Mammary epithelial cell (primary cell): ENCODE measurements at regions of chr13 and their contacts with region 1.

Region 1: GRCh38 chr13:74287724-74288169 is 153.5 kb upstream of the KLF12 start:
- DNase-seq: peak; percentile 30
- H3K4me3 ChIP-seq: no peak overlapping the region
- H3K27ac ChIP-seq: no peak overlapping the region
- H3K4me1 ChIP-seq: peaks cover 26% of the 10 kb centered on the region
- H3K27me3 ChIP-seq: no peaks in the 10 kb centered on the region
- CTCF ChIP-seq: no peak

Region 2: DNA sequence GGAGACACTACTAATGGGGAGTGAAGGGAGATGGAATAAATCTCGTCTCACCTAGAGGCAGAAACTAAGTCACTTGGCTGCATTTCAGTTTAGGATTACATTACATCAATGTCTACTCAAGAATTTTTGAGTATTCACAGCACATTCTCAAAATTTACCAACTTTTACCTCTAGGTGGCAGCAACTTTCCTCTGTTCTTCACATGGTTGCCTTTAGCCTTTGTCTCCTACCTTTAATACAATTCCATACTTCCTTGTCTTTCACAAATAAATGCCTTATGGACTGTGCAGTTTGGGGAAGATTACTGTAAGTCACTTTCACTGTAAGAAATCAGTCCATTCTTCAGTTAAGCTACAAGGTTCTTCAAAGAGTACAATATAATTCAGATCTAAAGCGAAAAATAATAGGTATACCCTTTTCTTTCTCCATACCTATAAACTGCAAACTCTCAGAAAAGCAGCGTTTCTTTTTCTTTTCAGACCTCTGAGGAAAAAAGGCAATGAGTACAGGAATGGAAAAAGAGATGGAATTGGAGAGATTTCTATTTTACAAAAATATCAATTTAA is 532.9 kb before region 1 on chr13:
- CTCF ChIA-PET with region 1: no interaction called
- dilution Hi-C with region 1: no loop called
- in situ Hi-C with region 1: no loop called
- intact Hi-C with region 1: loop called (anchors 1 kb)
- DNase-seq: peak; percentile 50
- H3K4me3 ChIP-seq: no peak overlapping the region
- H3K27ac ChIP-seq: no peak overlapping the region
- H3K4me1 ChIP-seq: no peaks in the 10 kb centered on the region
- H3K27me3 ChIP-seq: no peaks in the 10 kb centered on the region
- CTCF ChIP-seq: peak; percentile 57 to 72

Region 3: GRCh38 chr13:73938375-73939070 is 349.2 kb before region 1 on chr13:
- CTCF ChIA-PET with region 1: interaction called, 3 read pairs
- dilution Hi-C with region 1: no loop called
- in situ Hi-C with region 1: loop called (anchors 10 to 25 kb)
- intact Hi-C with region 1: no loop called
- DNase-seq: peak; percentile 78
- H3K4me3 ChIP-seq: no peak overlapping the region
- H3K27ac ChIP-seq: no peak overlapping the region
- H3K4me1 ChIP-seq: peaks cover 21% of the 10 kb centered on the region
- H3K27me3 ChIP-seq: no peaks in the 10 kb centered on the region
- CTCF ChIP-seq: no peak

Region 4: DNA sequence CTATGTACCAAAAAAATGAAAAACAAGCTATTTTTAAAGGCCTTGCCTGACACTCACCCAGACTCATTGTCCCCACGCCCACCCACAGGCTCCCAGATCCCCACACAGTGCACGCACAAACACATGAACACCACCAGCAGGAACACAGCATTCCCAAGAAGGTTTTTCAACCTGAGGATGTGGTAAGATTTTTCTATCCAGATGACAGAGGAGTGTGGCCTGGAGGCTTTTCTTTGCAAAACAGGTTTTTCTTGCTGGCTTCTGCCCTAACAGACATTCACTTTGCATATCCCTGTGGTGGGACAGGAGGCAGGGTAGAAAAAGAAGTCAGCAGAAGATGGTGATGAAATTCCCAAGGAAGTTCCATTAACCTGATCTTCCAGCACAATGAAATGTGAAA is 251.4 kb before region 1 on chr13:
- CTCF ChIA-PET with region 1: no interaction called
- dilution Hi-C with region 1: no loop called
- in situ Hi-C with region 1: no loop called
- intact Hi-C with region 1: loop called (anchors 10 kb)
- DNase-seq: peak; percentile 87
- H3K4me3 ChIP-seq: no peak overlapping the region
- H3K27ac ChIP-seq: peak overlapping the region; percentile 10
- H3K4me1 ChIP-seq: peaks cover 9% of the 10 kb centered on the region
- H3K27me3 ChIP-seq: no peaks in the 10 kb centered on the region
- CTCF ChIP-seq: no peak

Region 5: GRCh38 chr13:74217811-74218210 is 69.9 kb before region 1 on chr13:
- CTCF ChIA-PET with region 1: no interaction called
- dilution Hi-C with region 1: no loop called
- in situ Hi-C with region 1: no loop called
- intact Hi-C with region 1: no loop called
- DNase-seq: no peak
- H3K4me3 ChIP-seq: no peak overlapping the region
- H3K27ac ChIP-seq: no peak overlapping the region
- H3K4me1 ChIP-seq: no peaks in the 10 kb centered on the region
- H3K27me3 ChIP-seq: no peaks in the 10 kb centered on the region
- CTCF ChIP-seq: no peak

Region 6: GRCh38 chr13:75258159-75258782 is 970.5 kb after region 1 on chr13:
- CTCF ChIA-PET with region 1: interaction called, 3 read pairs
- dilution Hi-C with region 1: no loop called
- in situ Hi-C with region 1: no loop called
- intact Hi-C with region 1: loop called (anchors 2 kb)
- DNase-seq: peak; percentile 50
- H3K4me3 ChIP-seq: no peak overlapping the region
- H3K27ac ChIP-seq: no peak overlapping the region
- H3K4me1 ChIP-seq: peaks cover 3% of the 10 kb centered on the region
- H3K27me3 ChIP-seq: peaks cover 7% of the 10 kb centered on the region
- CTCF ChIP-seq: peak; percentile 74 to 78